Activated CD8-positive, alpha-beta memory T cell treated with anti-CD3 and anti-CD28 coated beads, Interleukin-2, amount 10 ng/mL, durations not matched to agents 7 days and 5 days (primary cell): ENCODE measurements at regions of chr17 and their contacts with region 1.

Region 1: DNA sequence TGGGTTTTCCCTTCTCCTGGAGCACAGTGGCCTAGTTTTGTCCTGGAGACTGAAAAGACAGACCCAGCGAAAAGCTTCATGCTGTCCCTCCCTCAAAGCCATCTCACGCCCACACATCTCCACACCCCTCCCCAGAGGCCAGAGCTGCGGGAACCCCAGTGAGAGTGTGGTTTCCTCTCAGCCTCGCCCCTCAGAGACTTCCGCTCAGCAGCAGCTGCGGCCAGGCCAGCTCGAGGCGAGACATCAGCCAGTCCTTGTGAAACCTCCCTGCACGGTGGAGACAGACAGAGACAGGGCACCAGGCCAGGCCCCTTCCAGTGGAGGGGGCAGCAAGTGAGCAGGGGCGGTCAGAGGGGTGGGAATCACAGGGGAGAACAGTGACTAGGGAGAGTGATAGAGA is 77.0 kb upstream of the TNRC6C start:
- DNase-seq: peak; percentile 94
- ATAC-seq: peak; percentile 73
- H3K4me3 Mint-ChIP-seq: peak overlapping the region; percentile 70
- H3K27ac Mint-ChIP-seq: peak overlapping the region; percentile 96
- H3K4me1 Mint-ChIP-seq: peaks cover 40% of the 10 kb centered on the region
- H3K27me3 Mint-ChIP-seq: peaks cover 9% of the 10 kb centered on the region

Region 2: DNA sequence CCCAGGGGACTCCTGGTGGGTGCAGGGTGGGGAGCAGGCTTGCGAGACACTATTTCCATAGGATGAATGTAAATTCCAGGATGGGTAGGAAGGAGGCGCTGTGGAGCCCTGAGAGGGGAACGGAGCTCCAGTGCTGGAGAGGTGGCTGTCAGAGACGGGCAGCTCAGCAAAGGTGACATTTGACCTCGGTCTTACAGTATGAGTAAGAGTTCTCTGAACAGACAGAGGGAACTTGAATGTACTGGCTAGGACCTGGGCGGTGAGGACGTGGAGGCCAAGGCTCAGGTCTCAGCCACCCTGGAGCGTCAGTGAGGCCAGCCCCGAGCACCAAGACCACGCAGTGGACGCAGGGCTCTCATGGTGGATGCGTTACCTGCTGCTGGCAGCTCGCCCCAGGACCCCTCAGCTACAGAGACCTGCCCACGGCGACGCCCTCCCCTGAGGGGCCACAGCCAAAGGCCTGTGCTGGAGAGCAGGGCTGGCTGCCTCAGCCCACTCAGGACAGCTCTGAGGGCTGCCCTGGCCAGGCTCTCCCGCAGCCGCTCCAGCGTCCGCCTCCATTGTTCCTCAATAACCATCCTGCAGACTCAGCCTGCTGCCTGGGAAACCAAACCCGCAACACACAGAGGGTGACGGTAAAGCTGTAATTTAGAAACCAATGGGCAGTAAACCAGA is 11.1 kb after region 1 on chr17:
- CTCF ChIA-PET with region 1: interaction called, 14 read pairs
- DNase-seq: no peak
- ATAC-seq: no peak
- H3K4me3 Mint-ChIP-seq: no peak overlapping the region
- H3K27ac Mint-ChIP-seq: no peak overlapping the region
- H3K4me1 Mint-ChIP-seq: peaks cover 23% of the 10 kb centered on the region
- H3K27me3 Mint-ChIP-seq: peaks cover 21% of the 10 kb centered on the region

Region 3: DNA sequence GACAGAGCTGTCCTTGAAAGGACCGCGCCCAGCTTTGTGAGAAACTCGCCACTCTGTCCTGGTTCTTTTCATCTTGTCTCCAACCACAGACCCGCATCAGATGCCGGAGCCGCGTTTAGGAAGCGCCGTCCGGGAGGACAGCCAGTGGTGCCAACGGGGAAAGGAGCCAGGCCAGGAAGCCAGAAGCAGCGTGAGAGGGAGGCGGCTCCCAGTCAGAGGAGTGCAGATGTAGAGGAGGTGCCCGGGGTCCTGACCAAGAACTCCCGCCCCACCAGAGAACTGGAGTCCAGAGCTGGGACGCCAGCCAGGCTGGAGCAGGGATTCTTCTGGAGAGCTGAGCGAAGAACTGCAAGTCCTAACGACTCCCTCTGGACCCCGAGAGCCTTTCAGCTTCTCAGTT is 27.7 kb after region 1 on chr17:
- CTCF ChIA-PET with region 1: no interaction called
- DNase-seq: no peak
- ATAC-seq: no peak
- H3K4me3 Mint-ChIP-seq: no peak overlapping the region
- H3K27ac Mint-ChIP-seq: no peak overlapping the region
- H3K4me1 Mint-ChIP-seq: no peaks in the 10 kb centered on the region
- H3K27me3 Mint-ChIP-seq: peaks cover 32% of the 10 kb centered on the region

Region 4: GRCh38 chr17:77957857-77958715 is 76.5 kb after region 1 on chr17 and contains the start of gene TNRC6C:
- CTCF ChIA-PET with region 1: interaction called, 14 read pairs
- DNase-seq: peak; percentile 100
- ATAC-seq: peak; percentile 91
- H3K4me3 Mint-ChIP-seq: peak within 1 kb of the TSS; percentile 84
- H3K27ac Mint-ChIP-seq: peak within 1 kb of the TSS; percentile 75
- H3K4me1 Mint-ChIP-seq: peaks cover 36% of the 10 kb centered on the region
- H3K27me3 Mint-ChIP-seq: peaks cover 34% of the 10 kb centered on the region
- total RNA-seq, gene TNRC6C: 24.9 to 39.3 TPM